ENCODE measurements at regions of chr16 and their contacts with region 1.

Region 1: DNA sequence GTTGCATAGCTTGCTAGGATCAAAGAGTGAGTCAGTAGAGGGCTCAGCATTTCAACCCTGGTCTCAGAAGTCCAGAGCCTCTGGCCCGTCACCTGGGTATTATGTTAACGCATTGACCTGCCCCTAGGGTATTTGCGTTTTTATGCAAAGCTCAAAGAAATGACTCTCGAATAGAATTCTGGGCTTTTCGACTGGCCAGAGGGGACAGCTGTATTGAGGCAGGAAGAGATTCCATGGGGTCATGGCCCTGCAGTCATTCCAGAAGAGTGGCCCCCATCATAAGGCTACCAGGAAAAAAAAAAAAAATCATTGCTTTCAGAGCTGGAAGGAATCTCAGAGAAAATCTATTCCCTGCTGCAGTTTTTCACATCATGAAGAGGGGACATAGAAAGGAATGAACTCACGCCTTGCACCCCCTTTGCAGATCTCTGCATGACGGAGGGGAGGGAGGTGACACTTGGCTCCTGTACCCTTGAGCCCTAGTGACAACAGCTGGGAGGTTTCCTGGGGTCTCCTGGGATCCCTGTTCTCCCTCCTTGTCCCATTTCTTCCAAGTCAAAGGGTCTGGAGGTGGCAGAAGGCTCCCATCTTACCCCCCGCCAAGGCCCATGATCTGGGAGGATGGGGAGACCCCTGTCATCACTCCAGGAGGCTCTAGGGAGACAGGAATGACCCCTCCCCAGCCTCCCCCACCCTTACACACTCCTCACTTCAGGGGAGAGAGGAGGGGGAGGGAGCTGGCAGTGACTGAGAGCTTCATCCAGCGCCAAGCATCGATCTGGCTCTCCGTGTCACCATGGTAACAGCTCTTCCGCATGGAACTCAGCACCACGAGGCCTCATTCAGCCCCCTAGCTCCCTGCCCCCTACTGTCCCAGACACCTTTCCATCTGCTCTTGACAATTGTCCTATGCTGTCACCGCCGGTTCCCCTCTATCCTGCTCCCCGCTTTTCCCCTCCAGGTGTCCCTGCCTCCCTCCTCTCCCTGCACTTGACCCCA is 35.8 kb downstream of the GP2 start:
- DNase-seq: no peak
- ATAC-seq: no peak
- H3K4me3 ChIP-seq: no peak overlapping the region
- H3K27ac ChIP-seq: no peak overlapping the region
- H3K4me1 ChIP-seq: no peaks in the 10 kb centered on the region
- H3K27me3 ChIP-seq: peaks cover 0 to 53% (median 24%) of the 10 kb centered on the region in 7 donors
- CTCF ChIP-seq: no peak

Region 2: DNA sequence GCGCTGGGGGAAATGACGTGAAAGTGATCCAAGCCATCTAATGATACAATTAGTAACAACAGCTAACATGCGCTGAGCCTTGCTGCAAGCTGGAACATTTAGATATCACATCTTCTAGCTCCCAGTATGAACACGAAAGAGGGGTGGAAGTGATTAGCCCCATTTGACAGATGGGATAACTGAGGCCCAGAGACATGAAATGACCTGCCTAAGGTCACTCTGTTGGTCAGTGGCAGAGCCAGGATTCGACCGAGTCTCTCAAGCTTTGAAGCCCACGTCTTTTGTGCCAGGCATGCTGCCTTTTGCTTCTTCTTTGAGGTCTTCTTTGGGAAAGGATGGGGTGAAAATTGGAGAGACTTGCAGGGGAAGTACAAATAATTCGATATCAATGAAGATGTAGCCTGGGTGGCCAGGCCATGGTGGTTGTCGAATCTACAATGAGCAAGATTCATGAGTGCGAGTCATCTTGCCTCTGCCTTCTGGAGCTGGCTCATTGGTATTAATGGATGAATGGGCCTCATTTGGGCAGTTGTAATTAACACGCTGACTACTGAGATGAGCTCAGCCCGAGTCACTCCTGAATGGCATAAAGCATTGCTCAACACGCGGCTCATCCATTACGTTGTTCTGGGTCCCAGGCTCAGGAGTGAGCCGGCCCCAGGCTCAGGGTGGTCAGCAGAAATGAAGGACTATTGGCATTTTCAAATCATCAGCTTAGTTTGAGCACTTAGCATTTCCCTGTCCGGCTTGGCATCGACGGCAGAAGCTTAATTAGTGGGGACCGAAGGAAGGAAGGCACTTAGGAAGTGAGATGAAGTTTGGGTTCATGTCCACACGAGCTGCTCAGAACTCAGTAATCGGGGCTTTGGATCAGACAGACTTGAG is 378.8 kb before region 1 on chr16:
- intact Hi-C with region 1: loop called in 2 of 10 experiments (anchors 5 to 10 kb)
- DNase-seq: no peak
- ATAC-seq: peak in 1 of 8 donors; percentile 37
- H3K4me3 ChIP-seq: no peak overlapping the region
- H3K27ac ChIP-seq: no peak overlapping the region
- H3K4me1 ChIP-seq: peaks cover 0 to 2% (median under 1%) of the 10 kb centered on the region in 9 donors
- H3K27me3 ChIP-seq: peaks cover 0 to 44% (median 13%) of the 10 kb centered on the region in 7 donors
- CTCF ChIP-seq: no peak

Region 3: GRCh38 chr16:20359997-20360396 is 68.5 kb after region 1 on chr16:
- intact Hi-C with region 1: loop called in 1 of 10 experiments (anchors 10 kb)
- DNase-seq: no peak
- ATAC-seq: no peak
- H3K4me3 ChIP-seq: no peak overlapping the region
- H3K27ac ChIP-seq: no peak overlapping the region
- H3K4me1 ChIP-seq: no peaks in the 10 kb centered on the region
- H3K27me3 ChIP-seq: peaks cover 0 to 48% (median 23%) of the 10 kb centered on the region in 7 donors
- CTCF ChIP-seq: peak in 4 of 9 donors; percentile 10 to 12 (median 10)

Region 4: DNA sequence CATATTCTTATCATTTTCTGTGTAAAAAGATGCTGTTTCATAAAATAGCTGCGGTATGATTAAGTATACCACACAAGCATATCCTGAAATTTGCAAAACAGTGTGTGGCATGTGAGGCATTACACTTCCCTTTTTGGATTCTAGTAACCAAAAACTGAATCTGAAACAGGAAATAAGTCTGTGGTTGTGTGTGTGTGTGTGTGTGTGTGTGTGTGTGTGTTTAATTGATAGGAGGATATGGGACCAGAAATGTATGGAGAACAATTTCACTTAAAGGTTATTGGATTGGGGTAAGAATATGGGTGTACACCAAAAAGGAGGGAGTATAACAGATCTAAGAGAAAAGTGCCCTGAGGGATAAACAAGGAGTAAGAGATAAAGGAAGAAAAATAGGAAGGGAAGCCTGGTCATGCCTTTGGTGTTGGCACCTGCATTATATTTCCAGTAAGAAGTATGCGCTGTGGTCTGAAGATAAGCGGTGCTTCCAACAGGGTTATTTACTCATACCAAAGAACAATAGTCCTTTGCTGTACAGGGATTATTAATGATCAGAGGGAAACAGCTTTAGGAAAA is 613.1 kb after region 1 on chr16:
- intact Hi-C with region 1: no loop called
- DNase-seq: no peak
- ATAC-seq: no peak
- H3K4me3 ChIP-seq: peak overlapping the region in 1 of 10 donors; percentile 6
- H3K27ac ChIP-seq: peak overlapping the region; percentile 2 to 97 (median 70)
- H3K4me1 ChIP-seq: peaks cover 18 to 81% (median 62%) of the 10 kb centered on the region in 9 donors
- H3K27me3 ChIP-seq: no peaks in the 10 kb centered on the region
- CTCF ChIP-seq: no peak

Region 5: GRCh38 chr16:21277927-21278706 is 986.6 kb after region 1 on chr16 and contains the start of gene CRYM:
- intact Hi-C with region 1: no loop called
- DNase-seq: peak; percentile 55 to 75
- ATAC-seq: peak; percentile 91 to 97 (median 96)
- H3K4me3 ChIP-seq: peak within 1 kb of the TSS; percentile 4 to 82 (median 61)
- H3K27ac ChIP-seq: peak within 1 kb of the TSS; percentile 31 to 94 (median 82)
- H3K4me1 ChIP-seq: peaks cover 0 to 30% (median 12%) of the 10 kb centered on the region in 9 donors
- H3K27me3 ChIP-seq: peaks cover 0 to 85% (median 22%) of the 10 kb centered on the region in 7 donors
- CTCF ChIP-seq: peak; percentile 60 to 89 (median 84)
- total RNA-seq, gene CRYM: 31.9 to 265 (median 186) TPM